SK-N-SH (cell line): ENCODE measurements at regions of chr11 and their contacts with region 1.

Region 1: DNA sequence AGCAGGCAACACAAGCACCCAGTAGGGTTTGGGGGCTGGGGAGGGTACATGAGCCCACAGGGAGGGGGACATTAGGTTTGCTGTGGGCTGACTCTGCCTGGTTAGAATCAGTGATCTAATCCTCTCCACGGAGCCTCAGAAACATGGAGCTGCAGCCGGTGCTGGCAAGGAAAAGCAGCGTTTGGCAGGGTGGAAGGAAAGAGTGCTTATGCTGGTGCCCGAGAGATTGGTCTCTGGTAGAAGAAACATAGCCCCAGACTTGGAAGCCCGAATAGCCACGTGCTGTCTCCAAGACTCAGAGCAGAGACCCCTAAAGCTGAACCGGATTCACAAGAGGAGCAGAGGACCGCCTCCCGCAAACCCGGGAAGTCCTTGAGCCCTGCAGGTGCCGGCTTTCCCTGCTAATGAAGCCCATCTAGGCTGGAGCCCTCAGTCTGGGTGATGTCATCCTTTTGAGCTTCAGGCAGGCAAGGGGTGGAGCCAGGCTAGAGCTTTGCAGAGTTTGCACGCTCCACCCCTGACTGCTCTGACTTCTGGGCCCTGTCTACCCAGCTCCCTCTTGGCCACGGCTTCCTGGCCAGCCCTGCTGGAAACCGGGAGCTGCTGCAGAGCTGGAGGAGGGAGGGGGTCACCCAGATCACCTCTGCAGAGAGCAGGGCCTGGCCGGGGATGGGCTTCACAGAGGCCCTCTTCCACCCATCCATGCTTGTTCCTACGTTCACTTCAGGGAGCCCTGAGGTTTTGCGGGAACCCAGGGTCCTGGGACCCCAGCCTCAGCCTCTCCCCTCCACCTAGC is 35.0 kb upstream of the JAM3 start:
- DNase-seq: peak; percentile 88
- H3K4me3 ChIP-seq: peak overlapping the region in 1 of 2 experiments; percentile 25; a peak in 2 of 4 replicates
- H3K27ac ChIP-seq: peak overlapping the region in 1 of 2 experiments; percentile 95; a peak in 2 of 4 replicates
- H3K4me1 ChIP-seq: peaks cover 13 to 59% of the 10 kb centered on the region in 2 experiments
- H3K27me3 ChIP-seq: peaks cover 4% of the 10 kb centered on the region; the same call in 1 of the 2 replicates
- CTCF ChIP-seq: no peak
- EP300 ChIP-seq: peak in 1 of 2 experiments; percentile 25; a peak in 1 of 4 replicates
- RAD21 ChIP-seq: no peak; the same call in 1 of the 2 replicates

Region 2: GRCh38 chr11:133934599-133935550 is 99.0 kb before region 1 on chr11:
- CTCF ChIA-PET with region 1: interaction called, 4 read pairs
- POLR2A ChIA-PET with region 1: interaction called, 11 read pairs
- DNase-seq: peak; percentile 87
- H3K4me3 ChIP-seq: no peak overlapping the region
- H3K27ac ChIP-seq: peak overlapping the region in 1 of 2 experiments; percentile 100; a peak in 2 of 4 replicates
- H3K4me1 ChIP-seq: peaks cover 0 to 66% of the 10 kb centered on the region in 2 experiments; a peak in 1 of 4 replicates
- H3K27me3 ChIP-seq: no peaks in the 10 kb centered on the region
- CTCF ChIP-seq: no peak
- EP300 ChIP-seq: 0 out of 4 replicates have a peak, but pooled peaks of 1 of the 2 experiments have one; percentile 12
- RAD21 ChIP-seq: no peak

Region 3: GRCh38 chr11:133947321-133947756 is 86.6 kb before region 1 on chr11:
- CTCF ChIA-PET with region 1: interaction called, 8 read pairs
- POLR2A ChIA-PET with region 1: interaction called, 69 read pairs
- DNase-seq: peak; percentile 77
- H3K4me3 ChIP-seq: peak overlapping the region in 1 of 2 experiments; percentile 15; a peak in 1 of 4 replicates
- H3K27ac ChIP-seq: peak overlapping the region in 1 of 2 experiments; percentile 89; a peak in 2 of 4 replicates
- H3K4me1 ChIP-seq: peaks cover 0 to 100% of the 10 kb centered on the region in 2 experiments; a peak in 1 of 4 replicates
- H3K27me3 ChIP-seq: no peaks in the 10 kb centered on the region; the same call in 1 of the 2 replicates
- CTCF ChIP-seq: peak; percentile 53
- EP300 ChIP-seq: no peak
- RAD21 ChIP-seq: peak; percentile 61

Region 4: GRCh38 chr11:133956650-133957633 is 77.0 kb before region 1 on chr11 and contains the start of gene IGSF9B:
- CTCF ChIA-PET with region 1: interaction called, 14 read pairs
- POLR2A ChIA-PET with region 1: interaction called, 8 read pairs
- DNase-seq: peak; percentile 98
- H3K4me3 ChIP-seq: peak within 1 kb of the TSS; percentile 63 to 64
- H3K27ac ChIP-seq: peak within 1 kb of the TSS in 1 of 2 experiments; percentile 91; a peak in 2 of 4 replicates
- H3K4me1 ChIP-seq: peaks cover 0 to 41% of the 10 kb centered on the region in 2 experiments; a peak in 2 of 4 replicates
- H3K27me3 ChIP-seq: peaks cover 17% of the 10 kb centered on the region
- CTCF ChIP-seq: no peak
- EP300 ChIP-seq: no peak
- RAD21 ChIP-seq: no peak
- polyA plus RNA-seq, gene IGSF9B: 0.41 and 0.96 TPM in 2 replicates

Region 5: GRCh38 chr11:134014511-134014910 is 19.4 kb before region 1 on chr11:
- CTCF ChIA-PET with region 1: interaction called, 10 read pairs
- POLR2A ChIA-PET with region 1: no interaction called
- DNase-seq: peak; percentile 70
- H3K4me3 ChIP-seq: no peak overlapping the region; a peak in 1 of 4 replicates
- H3K27ac ChIP-seq: no peak overlapping the region
- H3K4me1 ChIP-seq: no peaks in the 10 kb centered on the region
- H3K27me3 ChIP-seq: no peaks in the 10 kb centered on the region; the same call in 1 of the 2 replicates
- CTCF ChIP-seq: peak; percentile 24; the same call in 1 of the 2 replicates
- EP300 ChIP-seq: no peak
- RAD21 ChIP-seq: peak; percentile 73

Region 6: GRCh38 chr11:134170919-134171281 is 137.0 kb after region 1 on chr11:
- CTCF ChIA-PET with region 1: no interaction called
- POLR2A ChIA-PET with region 1: no interaction called
- DNase-seq: no peak
- H3K4me3 ChIP-seq: no peak overlapping the region
- H3K27ac ChIP-seq: no peak overlapping the region
- H3K4me1 ChIP-seq: no peaks in the 10 kb centered on the region
- H3K27me3 ChIP-seq: no peaks in the 10 kb centered on the region
- CTCF ChIP-seq: no peak
- EP300 ChIP-seq: no peak
- RAD21 ChIP-seq: no peak